ENCODE measurements at regions of chr16 and their contacts with region 1.

Region 1: DNA sequence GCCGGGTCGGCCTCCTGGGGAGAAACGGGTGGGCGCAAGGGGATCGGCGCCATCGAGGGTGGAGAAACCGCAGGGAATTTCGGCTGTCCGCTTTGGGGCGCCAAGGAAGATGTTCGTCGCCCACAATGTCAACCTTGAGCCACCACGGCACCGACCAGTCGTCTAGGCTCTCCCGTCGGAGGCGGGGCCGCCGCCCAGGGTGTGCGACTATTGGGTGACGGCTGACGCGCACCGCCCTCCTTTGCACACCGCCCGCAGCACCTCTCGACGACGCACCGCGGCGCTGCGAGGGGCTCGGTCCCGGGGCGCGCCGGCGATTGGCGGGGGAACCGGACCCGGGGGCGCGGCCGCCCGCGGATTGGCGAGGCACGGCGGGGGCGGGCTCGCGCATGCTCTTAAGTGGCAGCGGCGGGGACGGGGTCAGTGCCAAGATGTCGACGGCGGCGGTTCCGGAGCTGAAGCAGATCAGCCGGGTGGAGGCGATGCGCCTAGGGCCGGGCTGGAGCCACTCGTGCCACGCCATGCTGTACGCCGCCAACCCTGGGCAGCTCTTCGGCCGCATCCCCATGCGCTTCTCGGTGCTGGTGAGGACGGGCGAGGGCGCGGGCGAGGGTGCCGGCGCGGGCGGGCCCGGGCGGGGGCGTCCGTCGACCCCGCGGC is at the start of gene NUDT16L1:
- DNase-seq: peak; percentile 93 to 99 (median 97)
- H3K4me3 ChIP-seq: peak within 1 kb of the TSS; percentile 65 to 100 (median 93)
- H3K27ac ChIP-seq: peak within 1 kb of the TSS; percentile 48 to 97 (median 89)
- H3K27me3 ChIP-seq: no peaks in the 10 kb centered on the region
- CTCF ChIP-seq: peak in 54 of 56 donors; percentile 13 to 82 (median 57)
- total RNA-seq, gene NUDT16L1: 29.9 to 65.8 (median 39.8) TPM

Region 2: GRCh38 chr16:4601036-4601863 is 92.2 kb before region 1 on chr16:
- intact Hi-C with region 1: no loop called
- DNase-seq: peak in 6 of 10 donors; percentile 35 to 82 (median 44)
- H3K4me3 ChIP-seq: peak overlapping the region in 34 of 59 donors; percentile 4 to 52 (median 24)
- H3K27ac ChIP-seq: peak overlapping the region in 12 of 59 donors; percentile 4 to 76 (median 36)
- H3K27me3 ChIP-seq: no peaks in the 10 kb centered on the region
- CTCF ChIP-seq: no peak

Region 3: GRCh38 chr16:4616047-4616811 is 77.2 kb before region 1 on chr16:
- intact Hi-C with region 1: loop called (anchors 2 to 5 kb)
- DNase-seq: peak; percentile 98 to 100 (median 99)
- H3K4me3 ChIP-seq: peak overlapping the region; percentile 56 to 97 (median 81)
- H3K27ac ChIP-seq: peak overlapping the region; percentile 75 to 100 (median 98)
- H3K27me3 ChIP-seq: no peaks in the 10 kb centered on the region
- CTCF ChIP-seq: peak in 54 of 56 donors; percentile 15 to 77 (median 59)

Region 4: GRCh38 chr16:4734063-4734729 is 40.8 kb after region 1 on chr16 and contains the starts of genes ANKS3 and DNAAF8:
- intact Hi-C with region 1: loop called in 1 of 2 experiments (anchors 5 kb)
- DNase-seq: peak; percentile 90 to 98 (median 98)
- H3K4me3 ChIP-seq: peak within 1 kb of the TSS; percentile 74 to 100 (median 96)
- H3K27ac ChIP-seq: peak within 1 kb of the TSS in 48 of 59 donors; percentile 14 to 88 (median 69)
- H3K27me3 ChIP-seq: no peaks in the 10 kb centered on the region
- CTCF ChIP-seq: peak in 17 of 56 donors; percentile 4 to 42 (median 19)
- total RNA-seq, gene ANKS3: 28.1 to 66.1 (median 44.0) TPM
- total RNA-seq, gene DNAAF8: 0.23 to 4.7 (median 1.5) TPM

Region 5: GRCh38 chr16:5033256-5034169 is 340.1 kb after region 1 on chr16 and contains the start of gene NAGPA:
- intact Hi-C with region 1: loop called in 1 of 2 experiments (anchors 10 kb)
- DNase-seq: peak; percentile 92 to 97 (median 94)
- H3K4me3 ChIP-seq: peak within 1 kb of the TSS; percentile 38 to 97 (median 85)
- H3K27ac ChIP-seq: peak within 1 kb of the TSS in 58 of 59 donors; percentile 7 to 92 (median 80)
- H3K27me3 ChIP-seq: no peaks in the 10 kb centered on the region
- CTCF ChIP-seq: peak in 26 of 56 donors; percentile 6 to 50 (median 28)
- total RNA-seq, gene NAGPA: 29.1 to 81.0 (median 49.0) TPM

Measured in dorsolateral prefrontal cortex (tissue), 120 donors.